ENCODE measurements at regions of chr11 and their contacts with region 1.

Region 1: GRCh38 chr11:102293873-102294601 is 23.2 kb upstream of the BIRC3 start:
- DNase-seq: no peak
- ATAC-seq: peak in 2 of 4 donors; percentile 61 to 79
- H3K4me3 ChIP-seq: no peak overlapping the region
- H3K27ac ChIP-seq: no peak overlapping the region
- H3K4me1 ChIP-seq: no peaks in the 10 kb centered on the region
- H3K27me3 ChIP-seq: no peaks in the 10 kb centered on the region
- CTCF ChIP-seq: peak; percentile 54

Region 2: GRCh38 chr11:101721270-101721669 is 572.8 kb before region 1 on chr11:
- intact Hi-C with region 1: no loop called
- DNase-seq: no peak
- ATAC-seq: no peak
- H3K4me3 ChIP-seq: no peak overlapping the region
- H3K27ac ChIP-seq: no peak overlapping the region
- H3K4me1 ChIP-seq: no peaks in the 10 kb centered on the region
- H3K27me3 ChIP-seq: no peaks in the 10 kb centered on the region
- CTCF ChIP-seq: no peak

Region 3: DNA sequence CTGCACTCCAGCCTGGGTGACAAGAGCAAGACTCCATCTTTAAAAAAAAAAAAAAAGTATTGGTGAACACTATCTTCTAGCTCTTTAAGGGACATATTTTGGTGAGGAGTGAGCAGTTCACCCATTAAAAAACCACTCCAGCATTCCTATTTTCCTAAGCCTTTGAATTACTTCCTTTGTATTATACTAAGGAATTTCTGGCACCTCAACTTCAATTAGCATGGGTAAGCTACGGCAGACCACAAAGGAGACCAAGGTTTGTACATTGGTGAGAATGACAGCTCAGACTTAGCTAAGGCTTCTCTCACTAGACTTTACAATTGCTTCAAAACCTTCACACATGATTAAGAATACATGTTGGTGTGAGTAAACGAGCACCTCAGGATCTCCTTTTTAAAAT is 33.8 kb before region 1 on chr11:
- intact Hi-C with region 1: no loop called
- DNase-seq: no peak
- ATAC-seq: no peak
- H3K4me3 ChIP-seq: no peak overlapping the region
- H3K27ac ChIP-seq: no peak overlapping the region
- H3K4me1 ChIP-seq: no peaks in the 10 kb centered on the region
- H3K27me3 ChIP-seq: no peaks in the 10 kb centered on the region
- CTCF ChIP-seq: no peak

Region 4: DNA sequence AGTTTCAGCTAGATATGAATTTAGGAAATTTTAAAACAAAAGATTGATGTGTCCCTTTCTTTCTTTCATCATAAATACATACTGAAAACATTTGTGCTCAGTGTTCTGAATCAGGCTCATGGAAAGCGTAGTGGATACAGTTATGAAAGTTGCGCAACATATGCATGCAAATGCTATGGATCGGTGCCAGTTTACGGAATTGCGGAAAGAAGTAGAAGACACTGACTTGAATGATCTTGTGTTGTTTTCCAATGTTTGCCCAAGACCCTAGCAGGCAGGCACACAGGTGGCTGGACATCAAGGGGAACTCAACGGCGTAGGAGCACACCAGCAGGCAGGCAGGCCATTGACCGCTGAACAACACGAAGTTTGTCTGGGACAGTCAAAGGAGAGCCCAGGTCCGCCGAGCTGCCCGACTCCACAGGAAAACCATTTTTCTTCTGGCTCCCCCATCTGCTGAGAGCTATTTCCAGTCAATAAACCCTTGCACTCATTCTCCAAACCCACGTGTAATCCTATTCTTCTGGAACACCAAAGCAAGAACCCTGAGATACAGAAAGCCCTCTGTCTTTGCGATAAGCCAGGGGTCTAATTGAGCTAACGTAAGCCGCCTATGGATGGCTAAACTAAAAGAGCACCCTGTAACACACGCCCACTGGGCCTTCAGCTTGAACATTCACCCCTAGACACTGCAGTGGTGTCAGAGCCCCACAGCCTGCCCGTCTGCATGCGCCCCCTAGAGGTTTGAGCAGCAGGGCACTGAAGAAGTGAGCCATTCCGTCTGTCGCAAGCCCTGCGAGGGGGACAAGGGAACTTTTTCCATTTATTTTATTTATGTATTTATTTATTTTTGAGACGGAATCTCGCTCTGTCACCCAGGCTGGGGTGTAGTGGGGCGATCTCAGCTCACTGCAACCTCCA is 15.8 kb after region 1 on chr11:
- intact Hi-C with region 1: loop called in 1 of 2 experiments (anchors 2 kb)
- DNase-seq: no peak
- ATAC-seq: no peak
- H3K4me3 ChIP-seq: no peak overlapping the region
- H3K27ac ChIP-seq: no peak overlapping the region
- H3K4me1 ChIP-seq: no peaks in the 10 kb centered on the region
- H3K27me3 ChIP-seq: no peaks in the 10 kb centered on the region
- CTCF ChIP-seq: no peak

Region 5: GRCh38 chr11:102332611-102332994 is 38.6 kb after region 1 on chr11:
- intact Hi-C with region 1: loop called in 1 of 2 experiments (anchors 5 kb)
- DNase-seq: no peak
- ATAC-seq: no peak
- H3K4me3 ChIP-seq: no peak overlapping the region
- H3K27ac ChIP-seq: no peak overlapping the region
- H3K4me1 ChIP-seq: no peaks in the 10 kb centered on the region
- H3K27me3 ChIP-seq: no peaks in the 10 kb centered on the region
- CTCF ChIP-seq: no peak

Region 6: DNA sequence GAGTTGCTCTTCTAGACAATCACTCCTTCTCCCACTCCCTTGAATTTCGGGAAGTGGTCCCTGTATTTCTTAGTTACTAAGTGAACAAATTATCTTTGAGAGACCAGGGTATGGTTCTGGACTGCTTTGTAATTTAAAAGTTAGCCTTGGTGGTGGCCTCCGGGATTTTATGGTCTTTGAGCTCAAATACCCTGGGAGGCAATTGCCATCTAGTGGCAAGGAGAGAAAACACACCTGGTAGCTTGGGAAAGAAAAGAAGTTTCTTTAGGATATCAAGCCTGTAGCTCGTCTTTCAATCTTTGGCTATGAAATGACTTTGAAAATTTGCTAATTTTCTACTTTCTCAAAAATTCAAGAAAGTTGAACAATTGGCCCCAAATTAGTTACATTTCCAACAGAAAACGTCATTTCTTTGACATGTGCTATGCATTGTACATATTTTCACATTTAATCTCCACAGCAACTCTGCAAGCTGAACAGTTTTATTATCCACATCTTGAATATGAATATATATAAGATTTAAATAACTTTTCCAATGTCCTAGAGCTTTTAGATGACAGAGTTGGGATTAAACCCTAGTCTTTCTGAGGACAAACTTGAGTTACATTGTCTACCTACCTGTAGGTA is 372.4 kb after region 1 on chr11:
- intact Hi-C with region 1: loop called in 1 of 2 experiments (anchors 5 kb)
- DNase-seq: no peak
- ATAC-seq: no peak
- H3K4me3 ChIP-seq: no peak overlapping the region
- H3K27ac ChIP-seq: no peak overlapping the region
- H3K4me1 ChIP-seq: no peaks in the 10 kb centered on the region
- H3K27me3 ChIP-seq: peaks cover 0 to 4% (median 0%) of the 10 kb centered on the region in 3 donors
- CTCF ChIP-seq: peak; percentile 60

Measured in psoas muscle (tissue), 8 donors.